ENCODE measurements at regions of chr14 and their contacts with region 1.

Region 1: GRCh38 chr14:31456841-31457664 is at the start of gene DTD2:
- DNase-seq: peak; percentile 95

Region 2: GRCh38 chr14:31420319-31421111 is 36.5 kb before region 1 on chr14 and contains the start of gene HEATR5A:
- CTCF ChIA-PET with region 1: interaction called, 3 read pairs
- POLR2A ChIA-PET with region 1: interaction called, 24 read pairs
- DNase-seq: peak; percentile 93